ENCODE measurements at regions of chr9 and their contacts with region 1.

Region 1: DNA sequence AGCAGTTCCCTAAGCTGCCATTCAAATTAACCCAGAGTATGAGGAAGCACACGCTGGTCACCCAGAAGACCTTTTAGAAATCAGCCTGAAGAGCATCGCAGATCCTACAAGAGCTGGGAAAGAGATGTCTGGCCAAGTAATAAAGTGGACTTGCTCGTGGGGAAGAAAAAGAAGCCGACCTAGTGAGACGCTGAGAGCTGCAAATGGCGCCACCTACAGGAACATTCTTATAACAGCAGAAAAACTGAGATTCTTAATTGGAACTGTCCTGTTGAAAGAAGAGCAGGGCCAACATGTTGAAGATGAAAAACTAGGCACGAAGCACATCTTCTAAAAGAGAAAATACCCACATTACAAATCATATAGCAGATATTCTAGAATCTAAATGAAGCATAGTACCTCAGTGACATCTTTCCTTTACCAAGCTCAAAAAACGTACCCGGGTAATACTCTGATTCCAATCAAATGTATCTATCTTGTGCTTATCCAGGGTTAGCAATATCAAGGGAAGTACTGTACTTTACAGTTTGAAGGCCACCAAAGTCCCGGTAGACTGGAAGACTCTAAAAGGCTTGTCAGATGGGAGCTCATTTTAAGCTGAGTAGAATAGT is 3.9 kb upstream of the GNAQ start:
- DNase-seq: peak; percentile 69
- ATAC-seq: peak; percentile 13; the same call in 1 of the 3 replicates
- H3K4me3 ChIP-seq: peak overlapping the region in 1 of 3 experiments; percentile 29; a peak in 1 of 6 replicates
- H3K27ac ChIP-seq: no peak overlapping the region
- H3K4me1 ChIP-seq: peaks cover 26% of the 10 kb centered on the region
- H3K27me3 ChIP-seq: peaks cover 1 to 7% of the 10 kb centered on the region in 2 experiments; a peak in 3 of 5 replicates
- CTCF ChIP-seq: peak; percentile 83
- EP300 ChIP-seq: no peak
- POLR2A ChIP-seq: no peak
- RAD21 ChIP-seq: peak; percentile 81

Region 2: GRCh38 chr9:77751341-77752091 is 284.0 kb before region 1 on chr9:
- CTCF ChIA-PET with region 1: interaction called, 5 read pairs
- POLR2A ChIA-PET with region 1: no interaction called
- in situ Hi-C with region 1: no loop called
- intact Hi-C with region 1: loop called (anchors 5 kb)
- DNase-seq: peak; percentile 35
- ATAC-seq: peak; percentile 79
- H3K4me3 ChIP-seq: no peak overlapping the region
- H3K27ac ChIP-seq: no peak overlapping the region
- H3K4me1 ChIP-seq: no peaks in the 10 kb centered on the region
- H3K27me3 ChIP-seq: no peaks in the 10 kb centered on the region
- CTCF ChIP-seq: peak; percentile 68
- EP300 ChIP-seq: no peak
- POLR2A ChIP-seq: no peak
- RAD21 ChIP-seq: 0 out of 2 replicates have a peak, but pooled peaks have one; percentile 27

Region 3: DNA sequence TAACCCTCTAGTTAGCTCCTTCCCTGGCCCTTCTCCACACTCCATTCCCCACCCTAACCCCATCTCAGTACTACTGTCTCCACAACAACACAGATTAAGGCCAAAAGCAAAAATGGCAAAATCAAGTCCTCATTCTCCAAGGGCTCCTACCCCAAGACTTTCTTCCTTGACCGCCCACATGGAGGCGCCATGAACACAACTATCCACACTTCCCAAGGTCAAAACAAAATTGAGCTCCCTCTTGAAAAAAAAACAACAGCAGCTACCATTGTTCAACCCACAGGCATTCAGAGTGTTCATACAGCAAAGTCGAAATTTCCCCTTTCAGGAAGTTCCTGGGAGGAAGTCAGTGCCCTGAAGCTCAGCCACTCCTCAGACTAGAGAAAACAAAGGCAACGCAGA is 58.3 kb before region 1 on chr9:
- CTCF ChIA-PET with region 1: interaction called, 20 read pairs
- POLR2A ChIA-PET with region 1: interaction called, 6 read pairs
- in situ Hi-C with region 1: no loop called
- intact Hi-C with region 1: loop called (anchors 1 kb)
- DNase-seq: peak; percentile 79
- ATAC-seq: peak; percentile 85
- H3K4me3 ChIP-seq: no peak overlapping the region
- H3K27ac ChIP-seq: peak overlapping the region; percentile 19
- H3K4me1 ChIP-seq: peaks cover 32% of the 10 kb centered on the region
- H3K27me3 ChIP-seq: no peaks in the 10 kb centered on the region
- CTCF ChIP-seq: peak; percentile 76
- EP300 ChIP-seq: no peak; a peak in 1 of 4 replicates
- POLR2A ChIP-seq: no peak
- RAD21 ChIP-seq: peak; percentile 75

Region 4: GRCh38 chr9:78004478-78005229 is 30.8 kb before region 1 on chr9:
- CTCF ChIA-PET with region 1: no interaction called
- POLR2A ChIA-PET with region 1: interaction called, 3 read pairs
- in situ Hi-C with region 1: no loop called
- intact Hi-C with region 1: loop called (anchors 1 kb)
- DNase-seq: peak; percentile 85
- ATAC-seq: peak; percentile 93
- H3K4me3 ChIP-seq: no peak overlapping the region
- H3K27ac ChIP-seq: peak overlapping the region; percentile 32
- H3K4me1 ChIP-seq: peaks cover 69% of the 10 kb centered on the region
- H3K27me3 ChIP-seq: no peaks in the 10 kb centered on the region
- CTCF ChIP-seq: peak; percentile 49
- EP300 ChIP-seq: peak in 1 of 2 experiments; percentile 56; a peak in 2 of 4 replicates
- POLR2A ChIP-seq: no peak
- RAD21 ChIP-seq: 0 out of 2 replicates have a peak, but pooled peaks have one; percentile 30

Region 5: GRCh38 chr9:78149702-78150291 is 114.3 kb after region 1 on chr9:
- CTCF ChIA-PET with region 1: no interaction called
- POLR2A ChIA-PET with region 1: no interaction called
- in situ Hi-C with region 1: no loop called
- intact Hi-C with region 1: no loop called
- DNase-seq: no peak
- ATAC-seq: no peak
- H3K4me3 ChIP-seq: no peak overlapping the region
- H3K27ac ChIP-seq: no peak overlapping the region
- H3K4me1 ChIP-seq: no peaks in the 10 kb centered on the region
- H3K27me3 ChIP-seq: no peaks in the 10 kb centered on the region
- CTCF ChIP-seq: no peak
- EP300 ChIP-seq: no peak
- POLR2A ChIP-seq: no peak
- RAD21 ChIP-seq: no peak

Region 6: DNA sequence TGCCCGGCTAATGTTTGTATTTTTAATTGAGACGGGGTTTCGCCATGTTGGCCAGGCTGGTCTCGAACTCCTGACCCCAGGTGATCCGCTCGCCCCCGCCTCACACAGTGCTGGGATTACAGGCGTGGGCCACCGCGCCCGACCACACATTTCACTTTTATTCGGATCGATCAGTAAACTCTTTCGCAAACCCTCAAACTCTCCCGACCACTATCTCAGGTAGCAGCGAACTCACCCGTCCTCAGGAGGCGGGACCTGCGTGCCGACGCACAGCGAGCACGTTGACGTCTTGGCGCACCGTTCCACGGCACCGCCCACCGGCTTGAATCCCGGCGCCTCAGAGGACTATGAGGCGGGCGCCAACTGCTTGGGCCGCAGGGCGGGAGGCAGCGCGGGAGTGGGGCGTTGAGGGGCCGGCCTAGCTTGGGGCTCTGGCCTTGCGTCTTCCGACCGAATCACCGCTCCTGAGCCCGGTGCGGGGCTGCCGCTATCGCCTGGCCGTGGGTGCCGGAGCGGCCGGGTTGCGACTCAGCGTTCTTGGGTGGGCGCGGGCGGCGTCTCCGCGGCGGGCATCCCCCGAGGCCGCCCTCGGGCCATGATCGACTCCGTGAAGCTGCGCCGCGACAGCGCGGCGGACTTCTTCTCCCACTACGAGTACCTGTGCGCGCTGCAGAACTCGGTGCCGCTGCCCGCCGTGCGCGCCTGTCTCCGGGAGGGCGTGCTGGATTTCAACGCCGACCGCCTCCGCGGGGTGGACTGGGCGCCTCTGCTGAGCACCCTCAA is 200.5 kb after region 1 on chr9 and contains the start of gene CEP78:
- CTCF ChIA-PET with region 1: no interaction called
- POLR2A ChIA-PET with region 1: no interaction called
- in situ Hi-C with region 1: no loop called
- intact Hi-C with region 1: loop called (anchors 2 kb)
- DNase-seq: peak; percentile 89
- ATAC-seq: peak; percentile 96
- H3K4me3 ChIP-seq: peak within 1 kb of the TSS; percentile 80 to 96 (median 87)
- H3K27ac ChIP-seq: peak within 1 kb of the TSS; percentile 80
- H3K4me1 ChIP-seq: peaks cover 49% of the 10 kb centered on the region
- H3K27me3 ChIP-seq: no peaks in the 10 kb centered on the region
- CTCF ChIP-seq: no peak
- EP300 ChIP-seq: no peak
- POLR2A ChIP-seq: peak in 1 of 2 experiments; percentile 75
- RAD21 ChIP-seq: no peak
- total RNA-seq, gene CEP78: 30.8 and 38.3 TPM in 2 replicates

Region 7: DNA sequence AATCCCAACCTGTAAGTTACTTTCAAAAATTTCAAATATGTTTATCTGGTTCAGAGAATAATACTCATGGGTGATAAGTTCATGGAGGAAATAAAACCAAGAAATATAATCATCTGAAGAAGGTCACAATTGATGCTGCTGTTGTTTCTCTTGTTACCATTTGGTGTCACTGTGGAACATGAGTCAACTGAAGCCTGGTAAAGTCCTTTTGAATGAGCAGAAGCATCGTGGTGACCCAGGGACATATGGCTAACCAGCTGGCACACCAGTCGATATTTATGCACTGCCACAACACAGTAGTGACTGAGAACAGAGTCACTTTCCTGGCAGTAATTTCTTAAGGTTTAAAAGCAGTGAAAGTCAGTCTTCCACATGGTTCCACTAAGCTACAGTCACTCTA is 923.4 kb after region 1 on chr9:
- CTCF ChIA-PET with region 1: no interaction called
- POLR2A ChIA-PET with region 1: no interaction called
- in situ Hi-C with region 1: no loop called
- intact Hi-C with region 1: no loop called
- DNase-seq: no peak
- ATAC-seq: no peak
- H3K4me3 ChIP-seq: no peak overlapping the region
- H3K27ac ChIP-seq: no peak overlapping the region
- H3K4me1 ChIP-seq: no peaks in the 10 kb centered on the region
- H3K27me3 ChIP-seq: peaks cover 0 to 1% of the 10 kb centered on the region in 2 experiments; a peak in 1 of 5 replicates
- CTCF ChIP-seq: no peak
- EP300 ChIP-seq: no peak
- POLR2A ChIP-seq: no peak
- RAD21 ChIP-seq: no peak

Measured in HepG2 (cell line).